Left ventricle myocardium superior (tissue), 1 donor: ENCODE measurements at regions of chr6 and their contacts with region 1.

Region 1: DNA sequence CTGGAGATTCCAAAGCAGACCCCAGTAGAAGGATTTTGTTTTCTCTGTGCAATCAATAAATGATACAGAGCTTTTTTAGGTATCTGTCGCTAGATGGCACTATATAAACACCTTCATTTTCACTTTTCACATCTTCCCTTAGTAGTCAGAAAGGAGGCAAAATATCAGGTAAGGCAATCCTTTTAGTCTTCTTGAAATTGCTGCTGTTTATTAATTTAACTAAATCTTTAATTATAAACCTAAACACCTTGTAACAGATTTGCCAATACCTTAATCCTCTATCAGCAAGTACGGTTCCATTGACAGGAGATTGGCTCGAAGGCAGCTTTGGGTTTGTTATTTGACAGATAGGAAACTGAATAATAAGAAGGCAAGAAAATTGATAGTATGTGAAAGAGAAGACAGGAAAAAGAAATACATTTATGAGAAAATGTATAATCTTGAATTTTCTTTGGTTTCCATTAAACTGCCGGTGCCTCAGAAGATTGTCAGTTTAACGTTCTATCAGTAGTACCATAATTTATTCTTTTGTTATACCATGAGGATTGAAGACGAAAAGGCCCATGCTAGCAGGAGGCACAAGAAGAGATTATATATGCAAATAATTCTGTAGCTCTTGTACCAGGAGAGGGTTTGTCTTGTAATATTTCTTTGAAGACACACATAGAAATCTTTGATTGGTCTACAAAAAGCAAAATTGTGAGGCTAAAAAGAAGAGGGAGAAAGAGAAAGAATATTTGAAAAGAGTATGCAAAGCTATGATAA is 23.5 kb upstream of the IBTK start:
- DNase-seq: no peak
- ATAC-seq: no peak

Region 2: GRCh38 chr6:83051377-83052172 is 780.5 kb after region 1 on chr6:
- intact Hi-C with region 1: loop called (anchors 5 kb)
- DNase-seq: no peak
- ATAC-seq: no peak